SK-N-SH (cell line): ENCODE measurements at regions of chr4 and their contacts with region 1.

Region 1: GRCh38 chr4:48546336-48546735 is 56.3 kb downstream of the ZAR1 start:
- DNase-seq: no peak
- H3K4me3 ChIP-seq: no peak overlapping the region
- H3K27ac ChIP-seq: no peak overlapping the region
- H3K4me1 ChIP-seq: no peaks in the 10 kb centered on the region
- H3K27me3 ChIP-seq: no peaks in the 10 kb centered on the region
- CTCF ChIP-seq: peak; percentile 76
- EP300 ChIP-seq: no peak
- RAD21 ChIP-seq: peak; percentile 94

Region 2: GRCh38 chr4:48311896-48312295 is 234.4 kb before region 1 on chr4:
- CTCF ChIA-PET with region 1: interaction called, 17 read pairs
- POLR2A ChIA-PET with region 1: no interaction called
- DNase-seq: no peak
- H3K4me3 ChIP-seq: no peak overlapping the region
- H3K27ac ChIP-seq: no peak overlapping the region
- H3K4me1 ChIP-seq: no peaks in the 10 kb centered on the region
- H3K27me3 ChIP-seq: no peaks in the 10 kb centered on the region
- CTCF ChIP-seq: no peak
- EP300 ChIP-seq: no peak
- RAD21 ChIP-seq: no peak

Region 3: DNA sequence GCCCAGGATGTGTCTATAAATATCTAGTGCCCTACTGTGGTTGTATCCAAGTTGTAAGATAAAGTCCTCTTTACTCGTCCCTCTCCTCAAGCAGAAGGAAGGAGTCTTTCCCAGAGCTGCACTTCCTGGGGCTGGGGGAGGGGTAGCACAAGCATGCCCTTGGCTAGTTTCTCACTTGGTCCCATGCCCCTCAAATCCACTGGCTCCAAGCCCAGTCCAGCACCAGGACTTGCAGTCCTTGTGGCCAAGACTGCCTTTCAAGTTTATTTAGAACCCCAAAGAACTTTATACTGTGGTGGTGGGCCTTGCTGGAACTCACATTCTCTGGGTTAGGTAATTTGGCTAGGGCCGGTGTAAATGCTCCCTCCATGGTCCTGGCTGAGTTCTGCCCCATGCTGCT is 106.3 kb before region 1 on chr4:
- CTCF ChIA-PET with region 1: interaction called, 50 read pairs
- POLR2A ChIA-PET with region 1: no interaction called
- DNase-seq: no peak
- H3K4me3 ChIP-seq: no peak overlapping the region
- H3K27ac ChIP-seq: no peak overlapping the region
- H3K4me1 ChIP-seq: no peaks in the 10 kb centered on the region
- H3K27me3 ChIP-seq: no peaks in the 10 kb centered on the region
- CTCF ChIP-seq: no peak
- EP300 ChIP-seq: no peak
- RAD21 ChIP-seq: no peak

Region 4: GRCh38 chr4:48483006-48483776 is 63.1 kb before region 1 on chr4 and contains the start of gene SLC10A4:
- CTCF ChIA-PET with region 1: interaction called, 40 read pairs
- POLR2A ChIA-PET with region 1: no interaction called
- DNase-seq: peak; percentile 96
- H3K4me3 ChIP-seq: peak within 1 kb of the TSS; percentile 54 to 59
- H3K27ac ChIP-seq: peak within 1 kb of the TSS in 1 of 2 experiments; percentile 89; a peak in 2 of 4 replicates
- H3K4me1 ChIP-seq: peaks cover 0 to 24% of the 10 kb centered on the region in 2 experiments; a peak in 2 of 4 replicates
- H3K27me3 ChIP-seq: no peaks in the 10 kb centered on the region
- CTCF ChIP-seq: no peak
- EP300 ChIP-seq: peak in 1 of 2 experiments; percentile 85; a peak in 2 of 4 replicates
- RAD21 ChIP-seq: 0 out of 2 replicates have a peak, but pooled peaks have one; percentile 22
- polyA plus RNA-seq, gene SLC10A4: 2.5 and 2.6 TPM in 2 replicates

Region 5: GRCh38 chr4:48518143-48518542 is 28.2 kb before region 1 on chr4:
- CTCF ChIA-PET with region 1: interaction called, 13 read pairs
- POLR2A ChIA-PET with region 1: no interaction called
- DNase-seq: no peak
- H3K4me3 ChIP-seq: no peak overlapping the region
- H3K27ac ChIP-seq: no peak overlapping the region
- H3K4me1 ChIP-seq: no peaks in the 10 kb centered on the region
- H3K27me3 ChIP-seq: no peaks in the 10 kb centered on the region
- CTCF ChIP-seq: no peak
- EP300 ChIP-seq: no peak
- RAD21 ChIP-seq: no peak

Region 6: DNA sequence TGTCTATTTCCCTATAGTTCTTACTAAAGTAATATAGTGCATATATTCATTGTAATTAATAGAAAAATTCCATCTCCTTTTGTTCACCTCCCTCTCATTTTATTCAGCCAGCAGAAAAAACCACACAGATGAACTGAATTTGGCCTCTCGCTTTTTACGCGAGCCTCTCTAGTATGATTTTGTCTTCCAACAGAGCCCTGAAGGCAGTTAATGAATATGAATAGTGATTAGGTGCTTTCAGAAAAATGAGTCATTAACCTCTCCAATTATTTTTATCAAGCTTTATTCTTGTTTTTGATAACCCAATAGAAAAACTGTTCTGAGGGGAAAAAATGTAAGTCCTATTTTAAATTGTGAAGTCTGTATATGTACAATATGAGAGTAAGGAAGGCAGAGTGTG is 17.8 kb after region 1 on chr4:
- CTCF ChIA-PET with region 1: interaction called, 15 read pairs
- POLR2A ChIA-PET with region 1: no interaction called
- DNase-seq: no peak
- H3K4me3 ChIP-seq: no peak overlapping the region
- H3K27ac ChIP-seq: no peak overlapping the region
- H3K4me1 ChIP-seq: peaks cover 0 to 7% of the 10 kb centered on the region in 2 experiments; a peak in 1 of 4 replicates
- H3K27me3 ChIP-seq: no peaks in the 10 kb centered on the region
- CTCF ChIP-seq: no peak
- EP300 ChIP-seq: no peak
- RAD21 ChIP-seq: no peak

Region 7: DNA sequence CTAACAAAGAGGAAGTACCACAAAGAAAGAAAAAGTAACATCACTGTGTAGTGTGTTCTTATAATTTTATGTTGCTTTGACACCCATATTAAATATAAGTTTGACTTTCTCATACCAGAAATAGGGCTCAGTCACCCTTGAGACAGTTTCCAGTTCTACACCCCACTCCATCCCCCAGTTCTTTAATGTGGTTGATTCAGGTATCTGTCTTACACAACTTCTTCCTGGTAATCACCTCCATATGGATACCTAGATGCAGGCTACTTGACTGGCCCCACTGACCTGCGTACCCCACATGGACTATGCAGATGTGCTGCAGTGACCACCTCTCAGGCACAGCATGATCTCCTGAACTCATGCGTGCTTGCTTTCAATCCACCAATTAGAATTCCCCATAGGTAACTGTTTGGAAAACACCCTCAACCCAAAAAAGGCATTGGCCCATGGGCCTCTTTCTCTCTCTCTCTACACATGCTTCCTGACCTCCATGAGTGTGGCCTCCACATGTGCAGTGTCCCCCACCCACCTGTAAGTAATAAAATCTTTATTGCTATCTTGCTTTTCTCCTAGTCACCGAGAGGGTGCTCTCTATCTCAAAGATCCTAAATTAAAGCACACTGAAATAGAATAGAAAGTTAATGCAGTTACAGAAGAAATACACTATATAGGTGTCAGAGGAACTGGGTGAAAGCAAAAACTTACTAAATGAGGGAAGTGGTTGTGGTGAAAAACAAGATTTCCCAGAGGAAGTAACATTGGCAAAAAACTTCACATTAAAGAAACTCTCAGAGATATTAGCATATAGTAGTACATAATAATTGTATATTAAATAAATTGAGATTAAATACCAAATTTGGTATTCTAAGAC is 42.1 kb after region 1 on chr4:
- CTCF ChIA-PET with region 1: no interaction called
- POLR2A ChIA-PET with region 1: no interaction called
- DNase-seq: no peak
- H3K4me3 ChIP-seq: no peak overlapping the region
- H3K27ac ChIP-seq: no peak overlapping the region
- H3K4me1 ChIP-seq: no peaks in the 10 kb centered on the region; a peak in 1 of 4 replicates
- H3K27me3 ChIP-seq: no peaks in the 10 kb centered on the region
- CTCF ChIP-seq: 0 out of 2 replicates have a peak, but pooled peaks have one; percentile 10
- EP300 ChIP-seq: no peak
- RAD21 ChIP-seq: no peak